ENCODE measurements at regions of chr2 and their contacts with region 1.

Region 1: DNA sequence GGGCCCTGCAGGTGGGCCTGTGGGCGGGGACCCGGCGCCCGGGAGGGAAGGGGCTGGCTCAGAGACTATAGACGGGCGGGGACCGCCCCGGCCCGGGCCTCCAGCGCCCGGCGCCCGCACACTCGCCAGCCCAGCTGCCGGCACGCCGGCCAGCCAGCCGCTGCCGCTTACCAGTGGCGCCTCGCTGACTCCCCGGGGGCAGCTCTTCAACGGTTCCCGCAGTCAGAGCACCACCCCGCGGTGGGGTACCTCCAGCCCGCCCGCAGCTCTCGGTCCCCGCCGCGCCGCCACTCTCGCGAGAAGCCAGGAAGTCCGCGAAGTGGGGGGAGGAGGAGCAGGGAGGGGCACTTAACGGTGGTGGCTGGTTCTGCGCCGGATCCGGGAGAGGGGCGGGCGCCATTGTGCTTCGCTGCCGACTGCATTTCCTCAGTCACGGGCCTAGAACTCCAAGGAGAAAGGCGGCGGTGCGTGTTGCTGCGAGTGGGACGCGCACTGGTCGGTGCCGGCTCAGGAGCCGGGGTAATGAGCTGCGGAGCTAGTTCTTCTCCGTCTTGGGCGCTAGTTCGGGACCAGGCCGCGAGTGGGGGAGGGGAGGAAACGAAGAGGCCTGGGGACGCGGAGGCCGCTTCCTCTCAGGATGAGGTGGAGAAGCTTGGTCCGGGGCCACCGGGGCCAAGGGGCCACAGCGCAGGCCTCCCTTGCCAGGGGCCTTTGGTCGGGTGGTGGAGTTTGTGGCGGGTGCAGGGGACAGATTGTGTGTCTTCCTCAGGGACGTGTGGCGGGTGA is at the start of gene MARCHF7:
- DNase-seq: peak; percentile 97 to 98
- ATAC-seq: peak; percentile 98 to 99 (median 99)
- H3K4me3 ChIP-seq: peak within 1 kb of the TSS; percentile 81 to 100 (median 92)
- H3K27ac ChIP-seq: peak within 1 kb of the TSS; percentile 94 to 100 (median 99)
- H3K4me1 ChIP-seq: peaks cover 4 to 59% (median 46%) of the 10 kb centered on the region in 9 donors
- H3K27me3 ChIP-seq: no peaks in the 10 kb centered on the region
- CTCF ChIP-seq: peak; percentile 16 to 76 (median 57)
- total RNA-seq, gene MARCHF7: 81.6 to 101 (median 88.2) TPM

Region 2: GRCh38 chr2:159609811-159610432 is 102.4 kb before region 1 on chr2:
- intact Hi-C with region 1: loop called in 4 of 10 experiments (anchors 2 to 5 kb)
- DNase-seq: no peak
- ATAC-seq: peak in 1 of 8 donors; percentile 11
- H3K4me3 ChIP-seq: peak overlapping the region in 5 of 10 donors; percentile 4 to 15 (median 12)
- H3K27ac ChIP-seq: peak overlapping the region in 8 of 10 donors; percentile 0 to 99 (median 48)
- H3K4me1 ChIP-seq: peaks cover 0 to 88% (median 75%) of the 10 kb centered on the region in 9 donors
- H3K27me3 ChIP-seq: no peaks in the 10 kb centered on the region
- CTCF ChIP-seq: no peak

Region 3: DNA sequence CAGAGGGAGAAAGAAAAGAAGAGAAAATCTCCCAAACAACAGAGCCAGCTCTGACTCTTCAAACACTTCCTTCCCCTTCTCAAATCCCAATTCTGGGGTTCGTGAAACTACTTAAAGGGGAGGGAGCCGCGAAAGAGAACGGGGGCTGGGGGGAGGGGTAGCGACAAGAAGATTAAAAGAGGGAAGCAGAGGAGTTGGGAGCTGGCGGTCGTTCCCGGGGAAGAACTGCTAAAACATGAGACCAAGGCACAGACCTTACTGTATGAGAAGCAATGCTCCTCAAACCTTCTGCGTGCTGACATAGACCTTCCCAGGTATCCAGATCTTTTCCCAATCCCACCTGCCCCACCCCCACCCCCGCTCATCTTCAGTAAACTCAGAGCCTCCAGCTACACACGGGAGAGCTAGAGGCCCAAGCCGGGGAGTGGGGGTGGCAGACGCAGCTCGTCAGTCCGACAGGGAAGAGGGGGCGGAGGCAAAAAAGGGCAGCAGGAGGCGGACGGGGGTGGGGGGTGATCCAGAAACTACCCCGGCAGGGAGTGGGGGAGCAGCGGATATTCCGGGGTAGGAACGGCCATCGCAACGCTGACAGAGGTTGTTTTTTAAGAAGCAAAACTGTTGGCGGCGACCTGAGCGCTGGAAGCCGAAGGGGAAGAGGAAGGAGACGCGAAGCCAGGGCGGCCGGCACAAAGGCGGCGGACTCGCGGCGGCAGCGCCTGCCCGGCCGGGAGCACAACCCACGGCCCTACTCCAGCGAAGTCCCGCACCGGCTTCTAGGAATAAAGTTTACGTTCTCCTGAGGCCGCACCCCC is 97.0 kb before region 1 on chr2:
- intact Hi-C with region 1: loop called in 5 of 10 experiments (anchors 2 to 5 kb)
- DNase-seq: peak; percentile 89 to 95
- ATAC-seq: peak; percentile 93 to 98 (median 96)
- H3K4me3 ChIP-seq: peak overlapping the region; percentile 57 to 81 (median 74)
- H3K27ac ChIP-seq: peak overlapping the region; percentile 94 to 100 (median 98)
- H3K4me1 ChIP-seq: peaks cover 0 to 65% (median 47%) of the 10 kb centered on the region in 9 donors
- H3K27me3 ChIP-seq: no peaks in the 10 kb centered on the region
- CTCF ChIP-seq: no peak

Region 4: GRCh38 chr2:159677654-159678053 is 34.7 kb before region 1 on chr2:
- intact Hi-C with region 1: no loop called
- DNase-seq: no peak
- ATAC-seq: no peak
- H3K4me3 ChIP-seq: no peak overlapping the region
- H3K27ac ChIP-seq: no peak overlapping the region
- H3K4me1 ChIP-seq: no peaks in the 10 kb centered on the region
- H3K27me3 ChIP-seq: no peaks in the 10 kb centered on the region
- CTCF ChIP-seq: peak in 7 of 9 donors; percentile 26 to 57 (median 45)

Region 5: DNA sequence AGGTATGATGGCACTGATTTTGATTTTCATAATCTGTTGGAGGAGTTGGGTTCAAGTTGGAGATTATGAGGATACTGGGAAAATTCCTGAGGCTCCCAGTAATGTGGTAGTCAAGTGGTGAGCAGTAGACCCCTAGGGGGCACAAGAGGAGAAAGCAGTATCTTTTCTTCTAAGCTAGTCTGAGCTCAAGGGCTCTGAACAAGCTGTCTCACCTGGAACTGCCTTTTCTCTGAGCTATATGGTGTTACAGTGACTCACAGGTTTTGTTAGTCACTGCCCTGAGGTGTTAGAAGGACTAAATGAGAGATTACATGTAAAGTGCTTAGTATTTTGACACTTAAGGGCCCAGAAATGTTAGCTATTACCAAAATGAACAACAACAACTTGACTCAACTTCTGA is 43.5 kb after region 1 on chr2:
- intact Hi-C with region 1: loop called in 1 of 10 experiments (anchors 5 kb)
- DNase-seq: no peak
- ATAC-seq: peak in 3 of 8 donors; percentile 31 to 63 (median 43)
- H3K4me3 ChIP-seq: no peak overlapping the region
- H3K27ac ChIP-seq: peak overlapping the region in 5 of 10 donors; percentile 1 to 56 (median 21)
- H3K4me1 ChIP-seq: peaks cover 0 to 65% (median 46%) of the 10 kb centered on the region in 9 donors
- H3K27me3 ChIP-seq: no peaks in the 10 kb centered on the region
- CTCF ChIP-seq: peak in 4 of 9 donors; percentile 9 to 36 (median 23)

Region 6: DNA sequence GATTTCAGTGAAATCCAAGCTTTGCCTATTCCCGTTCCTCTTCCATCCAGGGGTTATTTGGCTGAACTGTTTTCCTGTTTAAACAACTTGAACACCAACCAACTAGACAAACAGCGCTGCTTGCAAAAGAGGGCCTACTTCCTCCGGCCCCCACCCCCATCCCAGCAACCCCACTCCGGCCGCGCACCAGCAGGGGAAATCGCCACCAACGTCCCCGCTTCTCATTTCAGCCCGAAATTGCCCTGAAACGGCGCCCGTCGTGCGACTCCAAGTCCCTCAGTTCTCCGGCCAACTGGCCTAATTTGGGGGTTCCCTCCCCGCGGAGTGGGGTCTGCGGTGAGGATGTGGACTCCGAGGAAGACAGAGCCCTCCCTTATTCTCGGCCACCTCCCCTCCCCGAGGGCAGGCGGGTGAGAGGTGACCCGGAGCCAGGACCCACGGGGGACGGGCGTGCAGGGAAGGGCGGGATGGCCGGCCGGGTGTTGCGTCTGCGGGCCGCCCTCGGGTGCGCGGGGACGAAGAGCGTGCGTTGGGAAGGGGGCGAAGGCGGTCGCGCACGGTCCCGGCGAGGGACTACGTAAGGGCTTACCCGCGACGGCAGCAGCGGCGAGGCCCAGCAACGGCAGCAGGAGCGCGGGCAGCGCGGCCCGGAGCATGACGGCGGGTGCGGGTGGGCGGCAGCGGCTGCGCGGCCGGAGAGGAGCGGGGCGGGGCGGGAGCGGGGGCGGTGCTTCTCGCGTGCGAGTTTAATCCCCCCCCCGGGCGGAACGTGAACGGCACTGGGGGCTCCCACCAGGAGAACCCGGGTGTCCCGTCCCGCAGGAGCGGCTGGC is 85.4 kb after region 1 on chr2 and contains the start of gene CD302:
- intact Hi-C with region 1: loop called in 4 of 10 experiments (anchors 5 to 10 kb)
- DNase-seq: peak; percentile 80 to 86
- ATAC-seq: peak; percentile 81 to 93 (median 88)
- H3K4me3 ChIP-seq: peak within 1 kb of the TSS; percentile 56 to 97 (median 81)
- H3K27ac ChIP-seq: peak within 1 kb of the TSS; percentile 5 to 90 (median 82)
- H3K4me1 ChIP-seq: peaks cover 0 to 50% (median 16%) of the 10 kb centered on the region in 9 donors
- H3K27me3 ChIP-seq: no peaks in the 10 kb centered on the region
- CTCF ChIP-seq: no peak
- total RNA-seq, gene CD302: 8.2 to 25.2 (median 12.9) TPM

Region 7: GRCh38 chr2:159807183-159808031 is 95.1 kb after region 1 on chr2:
- intact Hi-C with region 1: loop called in 2 of 10 experiments (anchors 5 to 10 kb)
- DNase-seq: peak in 1 of 2 donors; percentile 34
- ATAC-seq: peak in 3 of 8 donors; percentile 48 to 70 (median 58)
- H3K4me3 ChIP-seq: no peak overlapping the region
- H3K27ac ChIP-seq: no peak overlapping the region
- H3K4me1 ChIP-seq: peaks cover 0 to 5% (median 0%) of the 10 kb centered on the region in 9 donors
- H3K27me3 ChIP-seq: no peaks in the 10 kb centered on the region
- CTCF ChIP-seq: peak; percentile 49 to 82 (median 76)

Region 8: DNA sequence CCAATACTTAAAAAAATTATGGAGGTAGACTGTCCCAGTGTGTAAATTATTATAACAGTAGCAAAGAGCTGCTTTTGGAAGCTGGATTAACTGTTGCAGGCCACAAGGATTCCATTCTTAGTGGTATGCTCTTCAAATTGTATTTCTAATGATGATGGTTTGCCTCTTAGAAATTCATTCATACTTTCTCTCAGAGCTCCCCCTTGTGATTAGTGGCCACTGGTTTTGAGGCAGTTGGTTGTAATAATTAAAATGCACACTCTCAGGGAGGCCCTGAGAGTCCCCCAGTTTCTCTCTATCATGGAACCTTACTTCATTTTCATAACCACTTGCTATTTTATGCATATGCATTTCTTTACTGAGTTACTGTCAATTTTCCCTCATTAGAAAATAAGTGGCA is 227.6 kb after region 1 on chr2:
- intact Hi-C with region 1: loop called in 1 of 10 experiments (anchors 10 kb)
- DNase-seq: no peak
- ATAC-seq: peak in 1 of 8 donors; percentile 39
- H3K4me3 ChIP-seq: no peak overlapping the region
- H3K27ac ChIP-seq: no peak overlapping the region
- H3K4me1 ChIP-seq: peaks cover 0 to 27% (median 11%) of the 10 kb centered on the region in 9 donors
- H3K27me3 ChIP-seq: no peaks in the 10 kb centered on the region
- CTCF ChIP-seq: peak in 7 of 9 donors; percentile 9 to 55 (median 33)

Measured in heart right ventricle (tissue), 16 donors.